MCF 10A (cell line): ENCODE measurements at regions of chr5 and their contacts with region 1.

Region 1: GRCh38 chr5:140261403-140262171 is 41.3 kb downstream of the PFDN1 start:
- DNase-seq: peak; percentile 95
- H3K4me3 Mint-ChIP-seq: no peak overlapping the region
- H3K27ac Mint-ChIP-seq: peak overlapping the region; percentile 85
- H3K4me1 Mint-ChIP-seq: peaks cover 53% of the 10 kb centered on the region
- H3K27me3 Mint-ChIP-seq: no peaks in the 10 kb centered on the region
- CTCF ChIP-seq: no peak

Region 2: GRCh38 chr5:140235791-140236551 is 25.6 kb before region 1 on chr5:
- CTCF ChIA-PET with region 1: interaction called, 201 read pairs
- POLR2A ChIA-PET with region 1: interaction called, 10 read pairs
- intact Hi-C with region 1: no loop called
- DNase-seq: no peak
- H3K4me3 Mint-ChIP-seq: no peak overlapping the region
- H3K27ac Mint-ChIP-seq: no peak overlapping the region
- H3K4me1 Mint-ChIP-seq: peaks cover 23% of the 10 kb centered on the region
- H3K27me3 Mint-ChIP-seq: no peaks in the 10 kb centered on the region
- CTCF ChIP-seq: no peak

Region 3: DNA sequence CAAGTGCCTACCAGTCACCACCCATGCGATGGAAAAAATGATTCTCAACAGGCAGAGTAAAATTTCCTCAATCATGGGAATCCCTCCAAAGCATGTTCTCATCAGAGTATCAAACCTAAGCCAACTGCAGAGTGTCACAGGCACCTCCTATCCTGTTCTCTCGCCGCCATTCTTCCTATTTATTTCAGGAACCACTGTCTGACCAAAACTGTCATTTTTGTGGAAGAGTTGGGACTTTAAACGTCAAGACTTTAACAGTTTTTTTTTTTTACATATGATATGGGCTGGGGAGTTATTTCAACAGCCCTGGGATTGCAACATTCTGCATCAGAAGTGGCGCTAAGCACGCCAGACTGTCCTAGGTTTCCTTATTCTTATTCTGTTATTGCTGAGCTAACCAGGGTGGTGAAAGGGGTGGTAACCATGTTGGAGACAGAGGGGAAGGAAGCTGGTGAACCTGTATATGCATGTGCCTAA is 11.9 kb after region 1 on chr5:
- CTCF ChIA-PET with region 1: interaction called, 20 read pairs
- POLR2A ChIA-PET with region 1: interaction called, 23 read pairs
- intact Hi-C with region 1: no loop called
- DNase-seq: peak; percentile 55
- H3K4me3 Mint-ChIP-seq: no peak overlapping the region
- H3K27ac Mint-ChIP-seq: no peak overlapping the region
- H3K4me1 Mint-ChIP-seq: no peaks in the 10 kb centered on the region
- H3K27me3 Mint-ChIP-seq: no peaks in the 10 kb centered on the region
- CTCF ChIP-seq: no peak

Region 4: GRCh38 chr5:140295414-140295813 is 33.8 kb after region 1 on chr5:
- CTCF ChIA-PET with region 1: interaction called, 5 read pairs
- POLR2A ChIA-PET with region 1: interaction called, 14 read pairs
- intact Hi-C with region 1: no loop called
- DNase-seq: peak; percentile 94
- H3K4me3 Mint-ChIP-seq: no peak overlapping the region
- H3K27ac Mint-ChIP-seq: no peak overlapping the region
- H3K4me1 Mint-ChIP-seq: peaks cover 52% of the 10 kb centered on the region
- H3K27me3 Mint-ChIP-seq: no peaks in the 10 kb centered on the region
- CTCF ChIP-seq: no peak

Region 5: DNA sequence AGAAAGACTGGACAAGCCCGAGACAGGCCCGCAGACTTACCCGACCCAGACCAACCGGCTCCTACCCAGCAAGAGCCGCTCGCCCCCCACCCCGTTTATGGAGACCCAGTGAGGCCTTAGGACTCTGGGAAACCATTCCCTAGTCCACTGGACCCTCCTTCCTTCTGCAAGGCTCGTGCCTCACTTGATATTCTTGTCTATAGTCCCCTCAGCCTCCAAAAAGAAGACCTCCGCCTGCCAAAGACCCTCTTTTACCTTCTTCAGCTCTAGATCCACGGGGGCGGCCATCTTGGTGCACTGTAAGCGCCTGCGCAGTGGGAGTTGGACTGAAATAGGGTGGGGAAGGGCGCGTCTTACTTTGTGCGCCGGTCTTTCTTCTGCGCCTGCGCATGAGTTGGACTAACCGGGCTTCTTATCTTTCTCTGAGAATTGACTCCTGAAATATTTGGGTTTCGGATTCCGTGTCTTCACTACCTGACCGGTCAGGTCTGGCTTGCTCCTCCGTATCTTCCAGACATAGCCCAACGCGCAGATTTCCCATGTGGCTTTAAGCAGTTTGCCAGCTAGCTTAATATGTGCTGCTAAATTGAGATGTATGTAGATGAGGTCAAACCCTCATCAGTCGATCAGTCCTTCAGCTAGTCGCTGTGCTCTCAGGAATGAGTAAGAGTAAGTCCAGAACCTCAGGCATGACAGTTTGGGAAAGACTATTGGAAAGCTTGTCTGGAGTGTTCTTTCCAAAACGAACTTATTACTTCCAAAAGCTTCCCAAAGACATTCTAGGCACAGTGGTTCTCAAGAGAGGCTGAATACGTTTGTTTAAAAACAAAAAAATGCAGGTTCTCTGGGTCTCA is 41.4 kb after region 1 on chr5 and contains the start of gene PFDN1:
- CTCF ChIA-PET with region 1: interaction called, 5 read pairs
- POLR2A ChIA-PET with region 1: interaction called, 22 read pairs
- intact Hi-C with region 1: loop called (anchors 2 kb)
- DNase-seq: peak; percentile 99
- H3K4me3 Mint-ChIP-seq: peak within 1 kb of the TSS; percentile 100
- H3K27ac Mint-ChIP-seq: peak within 1 kb of the TSS; percentile 100
- H3K4me1 Mint-ChIP-seq: peaks cover 30% of the 10 kb centered on the region
- H3K27me3 Mint-ChIP-seq: no peaks in the 10 kb centered on the region
- CTCF ChIP-seq: no peak
- total RNA-seq, gene PFDN1: 94.7 and 102 TPM in 2 replicates

Region 6: GRCh38 chr5:140357726-140358093 is 96.1 kb after region 1 on chr5:
- CTCF ChIA-PET with region 1: interaction called, 1,450 read pairs
- POLR2A ChIA-PET with region 1: interaction called, 136 read pairs
- intact Hi-C with region 1: no loop called
- DNase-seq: peak; percentile 91
- H3K4me3 Mint-ChIP-seq: peak overlapping the region; percentile 33
- H3K27ac Mint-ChIP-seq: no peak overlapping the region
- H3K4me1 Mint-ChIP-seq: peaks cover 8% of the 10 kb centered on the region
- H3K27me3 Mint-ChIP-seq: no peaks in the 10 kb centered on the region
- CTCF ChIP-seq: peak; percentile 97